ENCODE measurements at regions of chr11 and their contacts with region 1.

Region 1: DNA sequence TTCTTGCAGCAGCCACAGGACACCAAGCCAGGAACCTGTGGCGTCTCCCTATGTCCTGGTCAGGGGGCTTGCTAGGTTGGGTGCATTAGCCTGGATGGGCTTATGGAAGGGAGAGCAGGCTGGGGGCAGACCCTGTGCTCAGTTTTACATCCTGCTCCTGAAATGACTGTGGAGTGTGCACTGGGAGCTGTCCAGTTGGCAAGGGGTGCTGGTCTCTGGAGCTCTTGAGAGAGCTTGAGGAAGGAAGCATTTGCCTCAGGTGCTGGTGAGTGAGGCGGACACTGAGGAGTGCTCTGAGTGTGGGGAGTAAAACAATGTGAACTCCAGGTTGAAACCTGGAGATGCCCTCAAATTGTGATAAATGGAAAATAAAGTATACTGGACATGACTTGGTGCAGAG is 3.4 kb downstream of the SCGB1D4 start:
- DNase-seq: no peak
- ATAC-seq: no peak

Region 2: GRCh38 chr11:62245271-62245753 is 50.2 kb before region 1 on chr11:
- intact Hi-C with region 1: loop called (anchors 10 kb)
- DNase-seq: no peak
- ATAC-seq: no peak

Region 3: DNA sequence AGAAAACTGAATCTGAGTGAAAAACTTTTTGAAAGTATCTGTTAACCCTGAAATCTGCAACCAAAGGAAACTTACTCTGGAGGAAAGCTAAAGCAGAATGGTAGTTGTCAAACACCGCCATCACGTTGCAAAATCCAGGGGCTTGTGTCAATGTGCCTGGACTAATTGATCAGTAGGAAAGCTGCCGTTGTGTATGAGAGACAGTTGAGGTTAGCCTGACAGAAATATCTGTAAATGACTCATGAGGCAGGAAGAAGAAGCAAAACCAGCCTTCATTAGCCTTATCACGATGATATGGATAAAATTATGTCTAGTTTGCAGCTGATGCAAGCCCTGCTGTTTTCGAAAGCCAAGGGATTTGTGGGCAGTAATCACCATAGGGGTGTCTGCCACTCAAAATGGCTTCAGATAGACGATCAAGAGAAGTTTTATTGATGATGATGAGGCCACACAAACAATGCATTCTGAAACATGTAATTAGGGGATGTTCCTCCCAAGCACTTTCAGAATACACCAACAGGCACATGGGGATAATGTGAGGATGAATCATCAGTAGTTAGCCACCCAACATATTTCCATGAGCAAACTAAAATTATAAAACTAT is 132.2 kb after region 1 on chr11:
- intact Hi-C with region 1: no loop called
- DNase-seq: no peak
- ATAC-seq: no peak